Activated T-helper 2 cell treated with anti-CD3 and anti-CD28 coated beads, Interferon-gamma antibody, Interleukin-2, Interleukin-4, amounts not matched to agents 10 μg/mL and 5 μg/mL and 100 μg/mL, durations not matched to agents 14 hours and 24 hours and 36 hours (primary cell): ENCODE measurements at regions of chr20 and their contacts with region 1.

Region 1: GRCh38 chr20:32357869-32358631 is at the start of gene ASXL1:
- DNase-seq: peak; percentile 96
- H3K4me3 Mint-ChIP-seq: peak within 1 kb of the TSS; percentile 99
- H3K27ac Mint-ChIP-seq: peak within 1 kb of the TSS; percentile 100
- H3K4me1 Mint-ChIP-seq: peaks cover 59% of the 10 kb centered on the region
- H3K27me3 Mint-ChIP-seq: no peaks in the 10 kb centered on the region
- total RNA-seq, gene ASXL1: 141 and 145 TPM in 2 replicates

Region 2: DNA sequence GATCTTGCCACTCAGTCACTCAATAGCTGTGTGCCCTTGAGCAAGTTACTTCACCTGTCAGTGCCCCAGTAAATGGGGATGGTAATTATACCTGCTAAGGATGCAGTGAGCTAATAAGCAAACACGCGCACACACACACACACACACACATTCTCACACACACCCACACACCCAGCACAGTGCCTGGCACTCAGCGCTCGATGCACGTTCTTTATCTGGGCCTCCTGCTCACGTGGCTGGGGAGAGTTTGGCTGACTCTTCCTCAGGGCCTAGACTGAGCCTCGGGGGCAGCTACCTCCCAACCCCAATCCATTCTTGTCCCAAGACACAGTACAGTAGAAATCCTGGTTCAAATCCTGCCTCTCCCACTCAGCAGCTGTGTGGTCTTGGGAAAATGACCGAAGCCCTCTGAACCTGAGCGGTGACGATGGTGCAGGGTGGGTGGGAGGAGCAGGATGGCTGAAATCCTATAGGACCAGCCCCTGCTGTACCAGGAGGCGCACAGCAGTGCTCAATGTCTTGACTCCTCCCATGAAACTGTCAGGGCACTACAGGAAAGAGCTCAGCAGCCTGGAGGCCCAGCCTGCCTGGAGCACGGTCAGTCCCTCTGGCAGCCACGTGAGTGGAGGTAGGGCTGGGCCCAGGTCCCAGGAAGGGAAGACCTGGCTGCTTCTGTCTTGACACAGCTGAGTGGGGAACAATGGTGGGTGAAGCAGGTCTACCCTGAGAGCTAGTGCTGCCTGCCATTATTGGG is 437.8 kb before region 1 on chr20:
- intact Hi-C with region 1: no loop called
- DNase-seq: no peak
- H3K4me3 Mint-ChIP-seq: no peak overlapping the region
- H3K27ac Mint-ChIP-seq: no peak overlapping the region
- H3K4me1 Mint-ChIP-seq: no peaks in the 10 kb centered on the region
- H3K27me3 Mint-ChIP-seq: peaks cover 13% of the 10 kb centered on the region

Region 3: GRCh38 chr20:32231847-32232246 is 126.2 kb before region 1 on chr20:
- intact Hi-C with region 1: loop called (anchors 5 kb)
- DNase-seq: peak; percentile 20
- H3K4me3 Mint-ChIP-seq: peak overlapping the region; percentile 69
- H3K27ac Mint-ChIP-seq: peak overlapping the region; percentile 97
- H3K4me1 Mint-ChIP-seq: peaks cover 38% of the 10 kb centered on the region
- H3K27me3 Mint-ChIP-seq: no peaks in the 10 kb centered on the region

Region 4: DNA sequence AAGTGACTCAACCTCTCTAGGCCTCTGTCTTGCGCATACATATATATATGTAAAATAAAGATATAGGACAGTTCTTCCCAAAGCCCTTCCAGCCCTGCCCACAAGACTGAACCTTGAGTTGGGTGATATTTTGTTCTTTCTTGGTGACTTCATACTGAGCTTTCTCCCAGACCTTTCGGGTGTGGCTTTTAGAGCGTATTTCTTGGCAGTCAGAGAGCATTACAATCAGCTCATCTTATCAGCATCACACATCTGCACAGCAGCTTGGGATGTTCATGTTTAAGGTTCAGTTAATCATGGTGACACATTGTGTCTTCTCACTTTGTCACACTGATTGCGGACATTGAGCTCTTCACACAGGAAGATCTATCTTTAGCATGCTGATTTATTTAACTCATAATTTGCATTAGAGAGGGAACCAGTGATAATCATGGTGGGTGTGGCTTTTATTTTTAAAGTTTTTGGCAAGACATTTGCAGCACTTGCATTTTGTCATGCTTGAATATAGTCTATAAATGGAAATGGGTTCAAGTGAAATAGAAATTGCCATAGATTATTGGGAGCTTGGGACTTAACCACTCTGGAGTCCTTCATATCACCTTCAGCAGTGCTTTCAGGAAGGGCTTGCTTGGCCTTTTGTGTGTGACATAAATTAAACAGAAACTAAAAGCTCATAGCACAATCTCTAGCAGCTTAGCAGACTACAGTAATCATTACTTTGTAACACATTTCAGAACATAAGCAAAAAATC is 72.3 kb before region 1 on chr20:
- intact Hi-C with region 1: loop called (anchors 1 kb)
- DNase-seq: peak; percentile 47
- H3K4me3 Mint-ChIP-seq: peak overlapping the region; percentile 60
- H3K27ac Mint-ChIP-seq: peak overlapping the region; percentile 84
- H3K4me1 Mint-ChIP-seq: peaks cover 60% of the 10 kb centered on the region
- H3K27me3 Mint-ChIP-seq: no peaks in the 10 kb centered on the region

Region 5: DNA sequence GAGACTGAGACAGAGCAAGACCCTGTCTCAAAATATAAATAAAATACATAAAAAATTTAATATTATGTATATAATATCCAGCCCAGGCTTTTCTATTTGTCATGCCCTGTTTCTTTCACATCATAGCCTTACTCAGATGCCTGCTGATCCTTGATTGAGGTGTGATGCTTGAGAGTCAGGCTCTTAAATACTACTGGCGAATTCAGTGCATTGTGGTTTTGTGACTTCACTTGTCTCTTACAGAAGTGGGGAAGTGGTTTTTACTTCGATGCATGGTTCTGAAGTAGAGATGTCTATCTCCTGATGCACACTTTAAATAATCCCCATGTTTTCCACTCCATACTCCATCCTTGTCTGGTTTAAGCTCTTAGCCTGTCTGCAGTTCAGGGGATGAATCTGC is 29.2 kb after region 1 on chr20:
- intact Hi-C with region 1: loop called (anchors 1 kb)
- DNase-seq: peak; percentile 49
- H3K4me3 Mint-ChIP-seq: peak overlapping the region; percentile 38
- H3K27ac Mint-ChIP-seq: peak overlapping the region; percentile 57
- H3K4me1 Mint-ChIP-seq: peaks cover 46% of the 10 kb centered on the region
- H3K27me3 Mint-ChIP-seq: no peaks in the 10 kb centered on the region

Region 6: DNA sequence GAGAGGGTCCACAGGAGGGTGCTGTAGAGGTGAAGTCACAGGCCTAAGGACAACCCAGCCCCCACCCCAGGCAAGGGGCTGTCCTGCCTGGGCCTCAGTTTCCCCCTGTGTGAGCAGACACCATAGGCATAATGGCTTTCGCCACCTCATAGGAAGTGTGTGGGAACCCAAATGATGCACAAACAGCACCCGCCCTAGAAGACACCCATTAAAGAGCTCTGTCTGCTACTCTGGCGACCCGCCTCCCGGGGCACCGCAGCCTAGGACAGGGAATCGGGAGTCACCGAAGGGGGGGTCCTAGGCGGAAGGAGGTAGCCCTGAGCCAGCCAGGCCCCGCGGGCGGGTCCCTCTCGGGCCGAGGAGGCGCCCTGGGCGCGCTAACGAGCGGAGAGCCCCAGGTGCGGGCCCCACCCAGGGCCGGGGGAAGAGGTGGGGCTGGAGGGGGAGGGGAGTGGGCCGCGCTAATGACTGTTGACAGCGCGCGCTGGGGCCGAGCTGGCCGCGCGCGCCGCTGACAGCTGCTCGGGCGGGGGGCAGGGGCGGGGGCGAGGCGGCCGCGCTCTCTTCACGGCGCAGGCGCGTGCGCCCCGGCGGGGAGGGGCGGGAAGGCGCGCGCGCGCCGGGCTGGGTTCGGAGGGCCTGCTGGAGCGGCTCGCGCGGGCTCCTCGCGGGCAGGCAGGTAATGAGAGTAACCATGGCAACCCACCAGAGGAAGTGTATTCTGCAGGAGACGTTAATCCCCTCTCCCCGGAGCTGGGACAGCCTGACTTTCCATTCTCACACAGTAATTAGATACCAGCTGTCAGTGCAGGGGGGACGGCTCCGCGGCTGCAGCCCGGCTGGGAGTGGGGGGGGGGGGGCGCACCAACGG is 178.1 kb after region 1 on chr20:
- intact Hi-C with region 1: loop called (anchors 2 kb)
- DNase-seq: peak; percentile 81
- H3K4me3 Mint-ChIP-seq: peak overlapping the region; percentile 66
- H3K27ac Mint-ChIP-seq: peak overlapping the region; percentile 79
- H3K4me1 Mint-ChIP-seq: peaks cover 61% of the 10 kb centered on the region
- H3K27me3 Mint-ChIP-seq: no peaks in the 10 kb centered on the region